Adrenal gland (tissue), 19 donors: ENCODE measurements at regions of chr11 and their contacts with region 1.

Region 1: GRCh38 chr11:28666632-28667031 is 558.4 kb downstream of the METTL15 start:
- DNase-seq: no peak
- H3K4me3 ChIP-seq: no peak overlapping the region
- H3K27ac ChIP-seq: no peak overlapping the region
- H3K4me1 ChIP-seq: no peaks in the 10 kb centered on the region
- H3K27me3 ChIP-seq: no peaks in the 10 kb centered on the region
- CTCF ChIP-seq: no peak
- POLR2A ChIP-seq: no peak

Region 2: DNA sequence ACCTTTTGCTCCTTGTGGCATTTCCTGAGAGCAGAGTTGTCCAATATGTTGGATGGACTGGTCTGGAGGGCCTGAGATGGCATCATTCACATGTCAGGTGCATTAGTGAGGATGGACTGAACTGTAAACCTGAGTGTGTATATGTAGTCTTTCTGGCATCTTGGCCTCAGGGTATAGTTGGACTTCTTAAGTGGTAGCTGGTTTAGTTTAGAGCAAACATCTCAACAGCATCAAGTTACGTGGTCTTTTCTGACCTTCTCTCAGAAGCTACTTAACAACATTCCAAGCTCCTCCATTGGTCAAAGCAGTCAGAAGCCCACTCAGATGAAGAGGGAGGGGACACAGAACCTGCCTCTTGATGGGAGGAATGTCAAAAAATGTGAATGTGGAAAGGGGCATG is 271.5 kb after region 1 on chr11:
- intact Hi-C with region 1: loop called in 1 of 2 experiments (anchors 5 kb)
- DNase-seq: no peak
- H3K4me3 ChIP-seq: no peak overlapping the region
- H3K27ac ChIP-seq: no peak overlapping the region
- H3K4me1 ChIP-seq: no peaks in the 10 kb centered on the region
- H3K27me3 ChIP-seq: no peaks in the 10 kb centered on the region
- CTCF ChIP-seq: no peak
- POLR2A ChIP-seq: no peak